Activated CD8-positive, alpha-beta memory T cell treated with anti-CD3 and anti-CD28 coated beads, Interleukin-2, amount 10 ng/mL, durations not matched to agents 7 days and 5 days (primary cell): ENCODE measurements at regions of chr9 and their contacts with region 1.

Region 1: GRCh38 chr9:124040935-124041816 is 29.6 kb downstream of the LHX2 start:
- DNase-seq: no peak
- ATAC-seq: peak; percentile 52
- H3K4me3 Mint-ChIP-seq: no peak overlapping the region
- H3K27ac Mint-ChIP-seq: no peak overlapping the region
- H3K4me1 Mint-ChIP-seq: peaks cover 4% of the 10 kb centered on the region
- H3K27me3 Mint-ChIP-seq: peaks cover 61% of the 10 kb centered on the region

Region 2: GRCh38 chr9:123401879-123402513 is 639.2 kb before region 1 on chr9:
- CTCF ChIA-PET with region 1: interaction called, 12 read pairs
- DNase-seq: no peak
- ATAC-seq: peak; percentile 49
- H3K4me3 Mint-ChIP-seq: no peak overlapping the region
- H3K27ac Mint-ChIP-seq: no peak overlapping the region
- H3K4me1 Mint-ChIP-seq: no peaks in the 10 kb centered on the region
- H3K27me3 Mint-ChIP-seq: no peaks in the 10 kb centered on the region

Region 3: DNA sequence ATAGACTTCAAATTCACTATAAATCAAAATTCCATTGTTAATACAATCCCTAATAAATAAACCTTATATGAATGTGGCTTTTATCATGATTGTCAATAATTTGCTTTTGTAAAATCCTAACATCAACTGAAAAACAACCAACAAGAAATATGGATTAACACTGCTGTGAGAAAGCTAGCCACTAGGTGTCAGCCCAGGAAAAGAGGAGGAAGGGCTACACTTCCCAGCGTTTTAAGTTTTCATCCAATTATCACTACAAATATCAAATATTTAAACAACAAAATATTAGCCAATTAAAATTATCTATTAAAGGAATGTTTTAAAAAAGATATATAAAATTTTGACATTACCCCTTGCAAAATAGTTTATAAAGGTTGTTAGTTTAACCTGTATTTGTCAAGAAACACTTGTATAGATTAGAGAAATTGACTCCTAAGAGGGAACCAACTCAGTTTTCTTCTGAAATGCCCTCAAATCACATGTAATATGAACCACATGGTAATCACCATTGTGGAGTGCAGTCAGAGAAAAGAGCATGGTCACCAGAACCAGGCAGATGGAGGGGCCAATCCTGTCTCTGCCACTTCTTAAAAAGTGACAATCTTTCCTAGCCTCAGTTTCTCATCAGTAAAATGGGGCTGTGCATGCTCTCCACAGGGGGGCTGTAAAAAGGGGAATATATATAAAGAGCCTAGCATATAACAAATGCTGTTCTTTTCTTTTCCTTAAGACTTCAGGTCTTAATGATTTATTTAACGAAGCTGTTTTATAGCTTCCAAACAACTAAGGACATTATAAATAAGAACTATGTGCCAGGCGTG is 497.0 kb before region 1 on chr9:
- CTCF ChIA-PET with region 1: interaction called, 56 read pairs
- DNase-seq: no peak
- ATAC-seq: no peak
- H3K4me3 Mint-ChIP-seq: no peak overlapping the region
- H3K27ac Mint-ChIP-seq: no peak overlapping the region
- H3K4me1 Mint-ChIP-seq: no peaks in the 10 kb centered on the region
- H3K27me3 Mint-ChIP-seq: no peaks in the 10 kb centered on the region

Region 4: DNA sequence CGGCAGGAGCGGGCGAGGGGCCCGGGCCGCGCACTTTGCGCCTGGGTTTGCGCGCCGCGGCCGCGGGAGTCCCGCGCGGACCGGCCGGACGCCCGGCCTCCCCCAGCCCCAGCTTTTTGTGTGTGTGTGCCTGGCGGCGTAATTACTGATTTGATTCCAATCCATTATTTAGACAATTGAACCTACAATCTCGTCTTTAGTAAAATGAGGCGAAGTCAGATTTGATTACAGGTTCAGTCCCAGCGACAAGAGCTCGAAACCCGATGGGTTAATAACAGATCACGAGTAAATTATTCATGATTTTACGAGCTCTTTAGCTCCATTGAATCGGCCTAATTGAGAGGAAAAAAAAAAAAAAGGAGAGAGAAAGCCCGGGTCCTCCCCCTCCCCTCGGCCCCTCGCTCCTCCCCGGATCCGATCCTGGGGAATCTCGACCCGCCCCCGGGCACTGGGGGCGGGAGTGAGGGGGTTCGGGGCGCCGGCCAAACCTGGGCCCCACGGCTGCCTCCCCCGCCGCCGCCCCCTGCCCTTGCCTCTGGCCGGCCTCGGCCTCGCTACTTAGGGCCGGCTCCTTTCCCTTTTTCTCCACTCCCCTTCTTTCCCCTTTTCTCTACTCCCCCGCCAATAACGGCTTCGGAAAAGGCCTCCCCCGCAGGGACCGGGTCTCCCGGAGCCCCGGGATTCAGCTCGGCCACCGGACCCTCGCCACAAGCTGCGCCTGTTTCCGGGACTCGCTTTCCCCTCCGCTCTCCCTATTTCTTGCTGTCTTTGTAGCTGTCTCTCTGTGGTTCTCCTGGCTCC is 23.0 kb before region 1 on chr9:
- CTCF ChIA-PET with region 1: interaction called, 10 read pairs
- DNase-seq: no peak
- ATAC-seq: no peak
- H3K4me3 Mint-ChIP-seq: no peak overlapping the region
- H3K27ac Mint-ChIP-seq: no peak overlapping the region
- H3K4me1 Mint-ChIP-seq: peaks cover 14% of the 10 kb centered on the region
- H3K27me3 Mint-ChIP-seq: peaks cover 88% of the 10 kb centered on the region